CD4-positive, alpha-beta T cell (primary cell): ENCODE measurements at regions of chr19 and their contacts with region 1.

Region 1: DNA sequence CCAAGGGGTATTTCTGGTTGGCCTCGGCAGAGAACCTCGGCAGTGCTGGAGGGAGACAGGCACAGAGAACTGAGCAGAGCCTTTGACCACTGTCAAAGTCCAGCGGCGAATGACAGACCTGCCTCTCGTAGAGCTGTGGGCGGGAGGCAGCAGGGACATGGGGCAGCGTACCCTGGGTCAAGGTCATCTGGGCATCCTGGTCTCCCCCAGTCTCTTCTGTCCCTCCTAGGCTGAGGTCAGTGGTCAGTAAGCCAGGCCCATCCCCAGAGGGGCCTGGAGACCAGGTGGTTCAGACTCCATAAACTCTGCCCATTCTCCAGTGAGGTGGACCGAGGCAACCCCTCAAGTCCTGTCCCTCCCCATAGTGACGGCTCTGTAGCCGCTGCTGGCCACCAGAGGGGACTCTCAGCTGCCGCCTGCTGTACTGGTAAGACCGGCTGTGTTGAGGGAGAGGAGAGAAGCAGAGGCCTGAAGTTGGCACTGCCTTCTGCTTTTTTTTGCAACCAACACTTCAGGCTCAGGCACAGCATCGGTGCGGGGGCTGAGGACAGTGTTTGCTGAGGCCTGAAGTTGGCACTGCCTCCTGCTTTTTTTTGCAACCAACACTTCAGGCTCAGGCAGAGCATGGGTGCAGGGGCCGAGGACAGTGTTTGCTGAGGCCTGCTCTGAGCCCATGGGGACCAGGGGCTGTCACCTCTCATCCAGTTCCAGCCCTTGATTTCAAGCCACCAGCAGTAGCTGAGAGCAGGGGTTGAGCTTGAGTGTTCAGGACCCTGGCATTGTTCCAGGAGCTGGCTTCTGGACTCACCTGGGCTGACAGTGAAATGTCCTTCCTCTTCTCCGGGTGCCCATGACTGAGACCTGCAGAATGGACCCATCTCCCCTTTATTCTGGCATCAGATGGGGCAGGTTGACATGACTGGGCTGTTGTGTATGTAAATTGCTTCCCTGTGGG is at the start of gene PGLYRP2:
- DNase-seq: peak in 2 of 14 experiments; percentile 26 to 28
- ATAC-seq: peak; percentile 63
- H3K4me3 ChIP-seq: no peak within 1 kb of the TSS
- H3K4me3 Mint-ChIP-seq: peak within 1 kb of the TSS; percentile 27
- H3K27ac ChIP-seq: no peak within 1 kb of the TSS
- H3K27ac Mint-ChIP-seq: peak within 1 kb of the TSS; percentile 70
- H3K4me1 ChIP-seq: peaks cover 33% of the 10 kb centered on the region
- H3K4me1 Mint-ChIP-seq: peaks cover 37% of the 10 kb centered on the region
- H3K27me3 ChIP-seq: no peaks in the 10 kb centered on the region
- H3K27me3 Mint-ChIP-seq: no peaks in the 10 kb centered on the region
- CTCF ChIP-seq: no peak
- total RNA-seq, gene PGLYRP2: not detected

Region 2: GRCh38 chr19:15432629-15433518 is 46.8 kb before region 1 on chr19:
- CTCF ChIA-PET with region 1: no interaction called
- POLR2A ChIA-PET with region 1: no interaction called
- intact Hi-C with region 1: no loop called
- DNase-seq: peak; percentile 85 to 97 (median 92)
- ATAC-seq: peak; percentile 94
- H3K4me3 ChIP-seq: peak overlapping the region; percentile 87
- H3K4me3 Mint-ChIP-seq: peak overlapping the region; percentile 90
- H3K27ac ChIP-seq: peak overlapping the region; percentile 40 to 65
- H3K27ac Mint-ChIP-seq: peak overlapping the region; percentile 82
- H3K4me1 ChIP-seq: peaks cover 38% of the 10 kb centered on the region
- H3K4me1 Mint-ChIP-seq: peaks cover 28% of the 10 kb centered on the region
- H3K27me3 ChIP-seq: no peaks in the 10 kb centered on the region
- H3K27me3 Mint-ChIP-seq: no peaks in the 10 kb centered on the region
- CTCF ChIP-seq: no peak

Region 3: GRCh38 chr19:15532779-15533521 is 53.3 kb after region 1 on chr19:
- CTCF ChIA-PET with region 1: no interaction called
- POLR2A ChIA-PET with region 1: no interaction called
- intact Hi-C with region 1: loop called in 1 of 2 experiments (anchors 5 kb)
- DNase-seq: peak in 4 of 14 experiments; percentile 16 to 43 (median 32)
- ATAC-seq: peak; percentile 61
- H3K4me3 ChIP-seq: no peak overlapping the region
- H3K4me3 Mint-ChIP-seq: no peak overlapping the region
- H3K27ac ChIP-seq: no peak overlapping the region
- H3K27ac Mint-ChIP-seq: peak overlapping the region; percentile 43
- H3K4me1 ChIP-seq: peaks cover 11% of the 10 kb centered on the region
- H3K4me1 Mint-ChIP-seq: peaks cover 16% of the 10 kb centered on the region
- H3K27me3 ChIP-seq: no peaks in the 10 kb centered on the region
- H3K27me3 Mint-ChIP-seq: no peaks in the 10 kb centered on the region
- CTCF ChIP-seq: no peak